ENCODE measurements at regions of chr10 and their contacts with region 1.

Region 1: GRCh38 chr10:49791100-49791499 is 29.0 kb upstream of the OGDHL start:
- H3K4me3 Mint-ChIP-seq: no peak overlapping the region
- H3K27ac Mint-ChIP-seq: no peak overlapping the region
- H3K4me1 Mint-ChIP-seq: no peaks in the 10 kb centered on the region
- H3K27me3 Mint-ChIP-seq: no peaks in the 10 kb centered on the region

Region 2: GRCh38 chr10:49803988-49804387 is 12.9 kb after region 1 on chr10:
- intact Hi-C with region 1: loop called (anchors 1 kb)
- H3K4me3 Mint-ChIP-seq: no peak overlapping the region
- H3K27ac Mint-ChIP-seq: no peak overlapping the region
- H3K4me1 Mint-ChIP-seq: no peaks in the 10 kb centered on the region
- H3K27me3 Mint-ChIP-seq: peaks cover 7% of the 10 kb centered on the region